ENCODE measurements at regions of chr17 and their contacts with region 1.

Region 1: GRCh38 chr17:3796110-3796821 is 4.7 kb downstream of the ITGAE start:
- DNase-seq: no peak
- ATAC-seq: no peak
- H3K4me3 ChIP-seq: no peak overlapping the region
- H3K27ac ChIP-seq: no peak overlapping the region
- H3K4me1 ChIP-seq: peaks cover 12% of the 10 kb centered on the region; the same call in 1 of the 2 replicates
- H3K27me3 ChIP-seq: no peaks in the 10 kb centered on the region
- CTCF ChIP-seq: no peak

Region 2: DNA sequence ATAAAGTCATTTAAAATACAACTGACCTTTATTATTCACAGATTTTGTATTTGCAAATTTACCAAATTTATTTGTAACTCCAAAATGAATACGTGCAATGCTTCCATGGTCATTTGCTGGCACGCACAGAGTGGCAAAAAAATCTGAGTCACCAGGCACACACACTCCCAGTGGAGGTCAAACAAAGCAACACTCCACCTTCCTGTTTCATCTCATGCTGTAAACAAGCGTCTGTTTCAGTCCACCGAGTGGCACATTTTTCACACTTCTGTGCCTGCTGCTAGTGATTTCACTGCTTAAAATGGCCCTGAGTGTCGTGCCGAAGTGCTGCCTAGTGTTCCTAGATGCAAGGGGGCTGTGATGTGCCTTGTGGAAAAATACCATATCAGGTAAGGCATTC is 22.5 kb after region 1 on chr17:
- CTCF ChIA-PET with region 1: no interaction called
- POLR2A ChIA-PET with region 1: no interaction called
- intact Hi-C with region 1: loop called (anchors 1 kb)
- DNase-seq: peak; percentile 30
- ATAC-seq: peak; percentile 92
- H3K4me3 ChIP-seq: no peak overlapping the region
- H3K27ac ChIP-seq: peak overlapping the region; percentile 46
- H3K4me1 ChIP-seq: 0 out of 2 replicates have a peak, but pooled peaks cover 8% of the 10 kb centered on the region
- H3K27me3 ChIP-seq: no peaks in the 10 kb centered on the region
- CTCF ChIP-seq: no peak

Region 3: GRCh38 chr17:3935140-3935542 is 138.9 kb after region 1 on chr17:
- CTCF ChIA-PET with region 1: no interaction called
- POLR2A ChIA-PET with region 1: no interaction called
- intact Hi-C with region 1: no loop called
- DNase-seq: peak; percentile 77
- ATAC-seq: peak; percentile 99
- H3K4me3 ChIP-seq: no peak overlapping the region
- H3K27ac ChIP-seq: no peak overlapping the region
- H3K4me1 ChIP-seq: no peaks in the 10 kb centered on the region
- H3K27me3 ChIP-seq: no peaks in the 10 kb centered on the region
- CTCF ChIP-seq: peak; percentile 74

Measured in PC-3 (cell line).